Activated CD4-positive, alpha-beta memory T cell treated with anti-CD3 and anti-CD28 coated beads for 36 hours (primary cell): ENCODE measurements at regions of chr14 and their contacts with region 1.

Region 1: DNA sequence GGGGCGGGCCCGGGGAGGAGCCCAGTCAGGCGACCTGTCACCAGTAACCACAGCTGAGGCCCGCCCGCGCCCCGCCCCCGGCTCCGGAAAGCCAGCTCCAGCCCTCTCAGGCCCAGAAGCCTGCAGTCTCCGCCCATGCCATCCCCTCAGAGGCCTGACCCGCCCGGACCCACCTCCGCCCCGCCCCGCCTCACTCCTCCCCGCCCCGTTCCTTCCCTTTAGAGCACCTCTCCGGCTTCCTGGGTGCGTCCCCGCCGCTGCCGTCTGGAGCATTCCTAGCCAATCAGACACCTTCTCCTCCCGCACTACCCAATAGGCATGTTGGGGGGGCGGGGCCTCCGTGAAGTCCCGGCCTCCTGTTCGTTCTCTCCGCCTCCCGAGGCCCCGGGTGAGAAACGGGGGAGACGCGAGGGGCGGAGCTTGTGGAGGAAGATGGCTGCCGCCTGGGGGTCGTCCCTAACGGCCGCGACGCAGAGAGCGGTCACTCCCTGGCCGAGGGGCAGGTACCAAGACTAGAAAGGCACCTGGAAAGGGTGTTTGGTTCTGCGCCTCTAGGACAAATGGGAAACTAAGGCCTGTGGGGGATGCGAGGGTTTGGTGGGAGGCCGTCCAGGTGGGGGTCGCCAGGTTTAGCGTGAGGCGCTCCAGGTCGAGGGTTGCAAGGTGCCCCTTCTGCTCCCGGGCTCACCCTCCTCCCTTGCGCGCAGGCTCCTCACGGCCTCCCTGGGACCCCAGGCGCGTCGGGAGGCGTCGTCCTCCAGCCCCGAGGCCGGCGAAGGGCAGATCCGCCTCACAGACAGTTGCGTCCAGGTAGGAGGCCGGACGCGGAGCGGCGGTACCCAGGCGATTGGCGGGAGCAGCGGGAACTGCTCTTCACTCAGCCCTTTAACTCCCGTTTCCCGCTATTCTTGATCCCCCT is at the start of gene ISCA2:
- DNase-seq: peak; percentile 100
- H3K4me3 Mint-ChIP-seq: peak within 1 kb of the TSS; percentile 87
- H3K27ac Mint-ChIP-seq: peak within 1 kb of the TSS; percentile 80
- H3K4me1 Mint-ChIP-seq: peaks cover 21% of the 10 kb centered on the region
- H3K27me3 Mint-ChIP-seq: no peaks in the 10 kb centered on the region
- total RNA-seq, gene ISCA2: 33.6 to 35.2 TPM

Region 2: GRCh38 chr14:74217672-74218448 is 275.7 kb before region 1 on chr14:
- CTCF ChIA-PET with region 1: no interaction called
- POLR2A ChIA-PET with region 1: no interaction called
- intact Hi-C with region 1: no loop called
- DNase-seq: peak; percentile 82
- H3K4me3 Mint-ChIP-seq: no peak overlapping the region
- H3K27ac Mint-ChIP-seq: no peak overlapping the region
- H3K4me1 Mint-ChIP-seq: no peaks in the 10 kb centered on the region
- H3K27me3 Mint-ChIP-seq: peaks cover 9% of the 10 kb centered on the region

Region 3: DNA sequence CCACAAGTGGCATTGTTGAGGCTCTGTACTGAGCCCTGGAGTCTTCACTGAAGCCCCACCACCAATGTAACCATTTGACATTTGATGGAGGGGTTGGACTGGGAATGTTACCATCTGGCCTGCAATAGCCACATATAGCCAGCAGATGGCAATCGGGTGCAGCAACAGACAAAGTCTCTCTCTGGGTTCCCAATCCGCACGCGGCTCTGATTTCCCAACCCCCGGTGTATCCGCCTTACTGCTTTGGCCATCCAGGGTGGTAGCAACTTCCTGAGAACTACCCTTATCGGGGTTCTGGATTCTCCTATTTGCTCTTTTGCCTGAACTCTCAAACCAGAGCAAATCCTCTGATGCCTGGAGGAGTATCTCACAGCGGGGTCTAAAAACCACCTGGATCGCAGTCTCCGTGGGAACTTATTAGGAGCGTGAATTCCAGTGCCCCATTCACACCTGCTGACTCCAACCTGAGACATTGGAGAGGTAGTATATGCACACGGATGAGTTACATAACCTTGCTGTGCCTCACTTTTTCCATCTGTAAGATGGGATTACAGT is 131.2 kb before region 1 on chr14:
- CTCF ChIA-PET with region 1: interaction called, 5 read pairs
- POLR2A ChIA-PET with region 1: no interaction called
- intact Hi-C with region 1: loop called (anchors 1 kb)
- DNase-seq: peak; percentile 77
- H3K4me3 Mint-ChIP-seq: no peak overlapping the region
- H3K27ac Mint-ChIP-seq: peak overlapping the region; percentile 43
- H3K4me1 Mint-ChIP-seq: no peaks in the 10 kb centered on the region
- H3K27me3 Mint-ChIP-seq: peaks cover 8% of the 10 kb centered on the region

Region 4: GRCh38 chr14:74429221-74429691 is 64.3 kb before region 1 on chr14:
- CTCF ChIA-PET with region 1: no interaction called
- POLR2A ChIA-PET with region 1: no interaction called
- intact Hi-C with region 1: no loop called
- DNase-seq: no peak
- H3K4me3 Mint-ChIP-seq: no peak overlapping the region
- H3K27ac Mint-ChIP-seq: no peak overlapping the region
- H3K4me1 Mint-ChIP-seq: peaks cover 2% of the 10 kb centered on the region
- H3K27me3 Mint-ChIP-seq: peaks cover 30% of the 10 kb centered on the region

Region 5: DNA sequence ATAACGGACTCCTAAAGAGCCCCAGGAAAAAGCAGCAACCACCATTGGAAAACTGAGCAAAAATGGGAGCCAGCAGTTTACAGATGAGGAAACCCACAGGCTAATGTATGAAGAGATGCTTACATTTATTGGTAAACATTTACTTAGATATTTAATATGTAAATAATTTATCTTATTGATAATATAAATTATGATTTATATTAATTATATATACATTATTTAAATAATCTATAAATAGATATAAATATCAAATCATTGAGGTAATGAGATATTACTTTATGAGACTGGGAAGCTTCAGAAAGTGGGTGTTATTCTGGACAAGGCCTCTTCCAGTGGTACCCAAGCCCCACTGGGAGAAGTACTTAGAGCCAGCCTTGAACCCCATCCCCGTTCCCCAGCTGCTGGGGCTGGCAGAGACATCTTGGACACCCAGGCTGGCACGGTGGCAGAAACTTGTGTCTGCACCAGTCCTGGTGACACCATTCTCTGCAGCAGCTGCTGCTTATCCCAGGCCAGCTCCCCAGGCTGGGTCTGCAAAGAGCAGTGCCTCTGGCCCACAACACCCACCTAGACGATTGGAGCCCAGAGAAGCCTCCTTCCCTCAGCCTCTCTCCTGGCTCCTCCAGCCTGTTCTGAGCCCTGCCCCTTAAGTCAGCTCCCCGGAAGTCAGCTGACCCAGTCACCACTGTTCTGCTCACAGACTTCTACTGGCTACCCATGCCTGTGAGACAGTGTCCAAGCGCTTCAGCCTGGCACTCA is 25.9 kb after region 1 on chr14:
- CTCF ChIA-PET with region 1: no interaction called
- POLR2A ChIA-PET with region 1: no interaction called
- intact Hi-C with region 1: no loop called
- DNase-seq: no peak
- H3K4me3 Mint-ChIP-seq: no peak overlapping the region
- H3K27ac Mint-ChIP-seq: no peak overlapping the region
- H3K4me1 Mint-ChIP-seq: peaks cover 5% of the 10 kb centered on the region
- H3K27me3 Mint-ChIP-seq: peaks cover 3% of the 10 kb centered on the region

Region 6: GRCh38 chr14:74579447-74580274 is 86.1 kb after region 1 on chr14:
- CTCF ChIA-PET with region 1: interaction called, 3 read pairs
- POLR2A ChIA-PET with region 1: no interaction called
- intact Hi-C with region 1: loop called (anchors 2 kb)
- DNase-seq: peak; percentile 70
- H3K4me3 Mint-ChIP-seq: no peak overlapping the region
- H3K27ac Mint-ChIP-seq: peak overlapping the region; percentile 82
- H3K4me1 Mint-ChIP-seq: peaks cover 28% of the 10 kb centered on the region
- H3K27me3 Mint-ChIP-seq: no peaks in the 10 kb centered on the region

Region 7: DNA sequence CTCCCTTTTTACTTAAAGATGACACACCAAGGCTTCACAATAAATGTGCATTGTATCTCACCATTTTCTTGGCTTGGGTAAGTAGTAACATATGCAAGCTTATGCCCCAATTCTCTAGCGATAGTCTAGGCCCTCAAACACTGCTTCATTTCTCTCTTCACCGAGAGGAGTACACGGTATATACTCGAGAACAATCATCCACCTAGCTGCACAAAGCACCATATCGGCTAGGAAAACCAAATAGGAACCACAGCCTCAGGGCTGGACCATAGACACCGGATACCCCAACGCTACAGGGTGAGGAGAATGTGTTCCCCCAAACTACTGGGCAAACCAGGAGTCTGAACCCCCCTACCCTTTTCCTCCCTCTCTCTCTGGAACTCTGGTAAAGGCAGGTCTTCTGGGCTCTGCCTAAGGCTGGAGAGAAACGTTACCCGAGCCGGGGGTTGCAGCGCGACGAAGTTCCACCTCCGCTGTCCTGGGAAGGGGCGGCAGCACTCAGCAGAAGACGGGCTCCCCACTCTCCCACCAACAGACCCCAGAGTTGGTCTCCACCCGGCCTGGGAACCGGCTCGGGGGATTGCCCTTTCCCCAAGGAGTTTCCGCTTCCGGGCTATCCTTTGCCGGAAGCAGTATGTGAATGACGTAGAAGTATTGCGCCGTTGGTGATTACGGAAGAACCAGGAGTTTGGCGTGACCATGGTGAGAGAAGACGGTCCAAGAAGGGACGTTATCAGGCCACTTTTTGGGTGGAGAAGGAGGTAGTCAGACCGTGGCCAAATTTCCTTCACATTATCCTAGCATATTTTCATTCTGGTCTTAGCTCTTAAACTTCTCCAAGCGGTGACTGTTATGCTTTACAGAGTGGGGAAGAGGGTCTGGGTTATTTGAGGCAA is 219.1 kb after region 1 on chr14 and contains the starts of genes AREL1 and FCF1:
- CTCF ChIA-PET with region 1: no interaction called
- POLR2A ChIA-PET with region 1: no interaction called
- intact Hi-C with region 1: loop called (anchors 2 kb)
- DNase-seq: peak; percentile 90
- H3K4me3 Mint-ChIP-seq: peak within 1 kb of the TSS; percentile 99
- H3K27ac Mint-ChIP-seq: peak within 1 kb of the TSS; percentile 89
- H3K4me1 Mint-ChIP-seq: peaks cover 44% of the 10 kb centered on the region
- H3K27me3 Mint-ChIP-seq: no peaks in the 10 kb centered on the region
- total RNA-seq, gene AREL1: 31.9 to 34.6 TPM
- total RNA-seq, gene FCF1: 72.1 to 72.5 TPM

Region 8: GRCh38 chr14:75249251-75249957 is 755.8 kb after region 1 on chr14:
- CTCF ChIA-PET with region 1: no interaction called
- POLR2A ChIA-PET with region 1: no interaction called
- intact Hi-C with region 1: loop called (anchors 2 kb)
- DNase-seq: peak; percentile 93
- H3K4me3 Mint-ChIP-seq: peak overlapping the region; percentile 33
- H3K27ac Mint-ChIP-seq: peak overlapping the region; percentile 64
- H3K4me1 Mint-ChIP-seq: peaks cover 55% of the 10 kb centered on the region
- H3K27me3 Mint-ChIP-seq: peaks cover 4% of the 10 kb centered on the region